ENCODE measurements at regions of chr2 and their contacts with region 1.

Region 1: DNA sequence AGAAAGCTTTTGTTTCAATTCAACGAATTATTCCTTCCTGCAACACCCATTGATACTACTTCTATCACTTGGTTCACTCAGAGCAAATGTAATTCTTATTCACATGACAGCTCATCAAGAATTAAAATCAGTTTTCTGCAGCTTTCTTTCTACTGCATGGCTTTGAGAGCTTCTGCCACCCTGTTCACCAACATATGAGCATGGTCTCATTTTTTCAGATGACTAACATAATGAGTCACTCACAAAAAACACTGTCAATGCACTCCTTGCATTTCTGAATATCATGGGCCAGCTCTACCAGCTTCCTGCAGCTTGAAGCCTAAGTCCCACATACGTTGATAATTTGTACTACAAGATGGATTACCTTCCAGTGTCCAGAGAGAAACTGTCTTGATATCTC is 342.9 kb downstream of the LRATD1 start:
- DNase-seq: peak; percentile 83
- ATAC-seq: peak; percentile 72
- H3K4me3 ChIP-seq: no peak overlapping the region
- H3K27ac ChIP-seq: peak overlapping the region; percentile 26
- H3K4me1 ChIP-seq: peaks cover 44% of the 10 kb centered on the region
- H3K27me3 ChIP-seq: no peaks in the 10 kb centered on the region
- CTCF ChIP-seq: no peak

Region 2: GRCh38 chr2:15084826-15085489 is 109.6 kb after region 1 on chr2:
- CTCF ChIA-PET with region 1: no interaction called
- POLR2A ChIA-PET with region 1: interaction called, 17 read pairs
- intact Hi-C with region 1: no loop called
- DNase-seq: no peak
- ATAC-seq: no peak
- H3K4me3 ChIP-seq: no peak overlapping the region
- H3K27ac ChIP-seq: no peak overlapping the region
- H3K4me1 ChIP-seq: no peaks in the 10 kb centered on the region
- H3K27me3 ChIP-seq: no peaks in the 10 kb centered on the region
- CTCF ChIP-seq: no peak

Measured in PC-3 (cell line).